ENCODE measurements at regions of chr7 and their contacts with region 1.

Region 1: GRCh38 chr7:44858161-44858560 is 10.3 kb upstream of the H2AZ2 start:
- DNase-seq: no peak
- ATAC-seq: no peak
- H3K4me3 Mint-ChIP-seq: no peak overlapping the region
- H3K27ac Mint-ChIP-seq: no peak overlapping the region
- H3K4me1 Mint-ChIP-seq: peaks cover 16% of the 10 kb centered on the region
- H3K27me3 Mint-ChIP-seq: peaks cover 10% of the 10 kb centered on the region

Region 2: GRCh38 chr7:44811086-44811485 is 47.1 kb before region 1 on chr7:
- CTCF ChIA-PET with region 1: no interaction called
- DNase-seq: no peak
- ATAC-seq: no peak
- H3K4me3 Mint-ChIP-seq: no peak overlapping the region
- H3K27ac Mint-ChIP-seq: no peak overlapping the region
- H3K4me1 Mint-ChIP-seq: peaks cover 4% of the 10 kb centered on the region
- H3K27me3 Mint-ChIP-seq: no peaks in the 10 kb centered on the region

Region 3: GRCh38 chr7:44847508-44847920 is 10.6 kb before region 1 on chr7:
- CTCF ChIA-PET with region 1: interaction called, 44 read pairs
- DNase-seq: peak; percentile 92
- ATAC-seq: peak; percentile 69
- H3K4me3 Mint-ChIP-seq: peak overlapping the region; percentile 97
- H3K27ac Mint-ChIP-seq: peak overlapping the region; percentile 99
- H3K4me1 Mint-ChIP-seq: peaks cover 36% of the 10 kb centered on the region
- H3K27me3 Mint-ChIP-seq: no peaks in the 10 kb centered on the region

Region 4: GRCh38 chr7:44885394-44886317 is 27.5 kb after region 1 on chr7 and contains the start of gene PURB:
- CTCF ChIA-PET with region 1: interaction called, 134 read pairs
- DNase-seq: peak; percentile 98
- ATAC-seq: peak; percentile 89
- H3K4me3 Mint-ChIP-seq: peak within 1 kb of the TSS; percentile 93
- H3K27ac Mint-ChIP-seq: peak within 1 kb of the TSS; percentile 100
- H3K4me1 Mint-ChIP-seq: peaks cover 56% of the 10 kb centered on the region
- H3K27me3 Mint-ChIP-seq: no peaks in the 10 kb centered on the region
- total RNA-seq, gene PURB: 33.4 to 35.4 TPM

Region 5: DNA sequence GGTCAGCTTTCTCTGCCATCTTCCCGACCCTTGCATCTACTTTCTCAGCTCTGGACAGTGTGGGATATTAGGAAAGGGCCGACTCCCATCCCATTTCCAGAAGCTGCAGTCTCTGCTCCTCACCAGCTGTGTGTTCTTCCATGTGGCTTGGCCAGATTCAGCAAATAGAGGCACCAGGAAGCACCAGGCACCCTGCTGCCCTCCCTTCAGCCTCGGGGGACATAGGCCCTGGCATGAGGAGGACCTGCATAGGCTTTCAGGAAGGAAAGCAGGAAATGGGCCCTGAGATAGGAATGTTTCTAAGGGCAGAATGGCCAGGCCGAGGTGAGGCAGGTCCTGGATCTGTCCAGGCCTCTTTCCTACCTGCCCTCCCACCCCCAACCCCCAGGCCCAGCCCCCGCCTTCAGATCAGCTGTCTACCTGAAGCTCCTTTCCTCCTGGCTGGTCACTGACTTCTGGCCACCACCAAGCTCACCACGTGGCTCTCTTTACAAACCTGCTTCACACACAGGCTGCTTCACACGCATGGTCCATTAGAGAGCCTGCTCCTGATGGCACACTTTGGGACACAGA is 54.7 kb after region 1 on chr7:
- CTCF ChIA-PET with region 1: interaction called, 93 read pairs
- DNase-seq: no peak
- ATAC-seq: no peak
- H3K4me3 Mint-ChIP-seq: no peak overlapping the region
- H3K27ac Mint-ChIP-seq: no peak overlapping the region
- H3K4me1 Mint-ChIP-seq: peaks cover 10% of the 10 kb centered on the region
- H3K27me3 Mint-ChIP-seq: no peaks in the 10 kb centered on the region

Region 6: DNA sequence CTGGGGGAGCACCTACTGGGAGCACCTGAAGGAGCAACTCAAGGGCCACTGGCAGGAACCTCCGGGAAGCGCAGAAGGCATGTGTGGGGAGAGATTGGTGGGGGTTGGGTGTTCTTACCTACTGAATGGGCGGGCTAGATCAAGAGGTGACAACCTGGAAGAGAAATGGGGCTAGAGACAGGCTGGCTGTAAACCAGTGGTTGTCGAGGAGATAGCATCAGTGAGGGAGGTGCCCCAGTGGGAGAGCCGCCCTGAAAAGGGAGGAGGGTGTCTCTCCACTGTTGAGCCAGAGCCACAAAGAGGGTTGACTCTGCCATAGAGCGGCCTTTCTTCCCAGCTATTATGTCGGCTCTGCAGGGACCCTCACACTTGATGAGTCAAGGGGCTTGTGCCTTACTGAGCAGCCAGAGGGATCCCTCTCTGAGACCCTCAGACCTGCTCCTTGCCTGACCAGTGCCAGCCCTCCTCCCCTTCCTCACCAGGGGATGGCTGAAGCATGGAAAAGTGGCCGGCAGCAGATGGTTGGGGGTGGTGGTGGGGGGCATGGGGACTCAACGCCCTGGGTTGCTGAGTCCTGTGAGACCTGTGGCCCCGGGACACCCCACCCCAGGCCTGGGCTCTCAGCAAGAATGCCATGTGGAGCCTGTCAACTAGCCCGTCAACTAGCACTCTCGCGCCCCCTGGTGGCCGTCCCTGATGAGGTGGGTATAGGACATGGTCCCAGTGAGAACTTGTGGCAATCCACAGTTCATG is 63.6 kb after region 1 on chr7:
- CTCF ChIA-PET with region 1: interaction called, 93 read pairs
- DNase-seq: peak; percentile 96
- ATAC-seq: peak; percentile 99
- H3K4me3 Mint-ChIP-seq: no peak overlapping the region
- H3K27ac Mint-ChIP-seq: peak overlapping the region; percentile 46
- H3K4me1 Mint-ChIP-seq: peaks cover 14% of the 10 kb centered on the region
- H3K27me3 Mint-ChIP-seq: peaks cover 5% of the 10 kb centered on the region

Measured in activated CD8-positive, alpha-beta memory T cell treated with anti-CD3 and anti-CD28 coated beads, Interleukin-2, amount 10 ng/mL, durations not matched to agents 7 days and 5 days (primary cell).